ENCODE measurements at regions of chr5 and their contacts with region 1.

Region 1: GRCh38 chr5:155616779-155617392 is 603.3 kb downstream of the KIF4B start:
- DNase-seq: peak; percentile 9 to 73
- H3K4me3 ChIP-seq: no peak overlapping the region
- H3K4me1 ChIP-seq: no peaks in the 10 kb centered on the region
- H3K27me3 ChIP-seq: no peaks in the 10 kb centered on the region; the same call in none of the 2 replicates

Region 2: DNA sequence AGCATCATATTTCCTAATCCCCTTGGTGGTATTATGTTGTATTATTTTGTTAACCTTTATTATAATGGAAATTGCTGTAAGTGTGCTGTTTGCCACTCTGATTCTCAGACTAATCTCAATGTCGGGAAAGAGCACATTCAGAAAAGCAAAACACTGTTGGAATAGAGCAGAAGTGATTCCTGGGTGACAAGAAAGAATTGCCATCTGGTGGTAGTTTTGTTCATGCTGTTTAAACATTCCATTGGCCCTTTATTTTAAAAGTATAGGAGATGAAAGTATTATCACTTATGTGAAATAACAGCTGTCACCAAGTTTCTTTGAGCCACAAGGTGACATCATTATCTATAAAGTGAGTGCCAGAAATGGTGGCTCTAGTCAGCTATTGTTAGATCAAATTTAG is 408.8 kb after region 1 on chr5:
- in situ Hi-C with region 1: no loop called
- DNase-seq: no peak
- H3K4me3 ChIP-seq: no peak overlapping the region
- H3K4me1 ChIP-seq: no peaks in the 10 kb centered on the region
- H3K27me3 ChIP-seq: 0 out of 2 replicates have a peak, but pooled peaks cover 2% of the 10 kb centered on the region

Region 3: GRCh38 chr5:156815988-156816599 is 1199.2 kb after region 1 on chr5:
- in situ Hi-C with region 1: loop called (anchors 25 kb)
- DNase-seq: peak; percentile 48 to 72
- H3K4me3 ChIP-seq: no peak overlapping the region
- H3K4me1 ChIP-seq: no peaks in the 10 kb centered on the region
- H3K27me3 ChIP-seq: no peaks in the 10 kb centered on the region

Region 4: DNA sequence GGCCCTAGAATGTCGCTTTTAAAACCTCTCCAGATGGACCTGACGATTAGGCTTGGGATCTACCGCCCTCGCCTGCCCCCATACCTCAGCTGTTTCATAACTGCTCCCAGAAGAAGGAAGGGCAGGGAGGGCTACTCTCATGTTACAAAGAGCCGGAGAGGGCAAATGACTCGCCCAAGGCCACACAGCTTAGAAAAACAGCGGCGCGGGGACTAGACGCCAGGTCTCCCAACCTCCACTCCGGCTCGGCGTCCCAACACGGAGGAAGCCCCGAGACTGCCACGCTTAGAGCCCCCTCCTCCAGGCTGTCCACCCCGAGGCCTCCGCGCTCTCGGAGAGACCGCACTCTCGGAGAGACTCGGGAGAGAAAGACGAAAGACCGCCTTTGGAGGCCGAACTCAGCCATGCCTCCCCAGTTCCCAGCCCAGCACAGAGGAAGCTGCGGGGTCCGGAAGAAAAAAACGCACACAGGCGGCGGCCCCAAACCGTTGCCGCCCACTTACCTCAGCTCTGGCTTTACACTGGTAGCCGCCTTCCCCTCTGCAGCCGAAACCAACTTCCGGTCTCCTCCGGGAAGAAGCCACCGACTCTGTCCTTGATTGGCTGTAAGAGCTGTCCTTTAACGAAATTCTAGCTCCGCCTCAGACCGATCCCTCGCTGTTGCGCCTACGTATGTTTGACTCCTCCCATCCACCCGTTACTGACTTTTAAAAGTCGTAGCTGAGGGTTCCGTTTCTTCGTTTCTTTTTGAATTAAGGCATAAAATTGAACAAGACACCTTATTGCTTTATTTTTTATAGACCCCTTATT is 1525.6 kb after region 1 on chr5 and contains the start of gene MED7:
- in situ Hi-C with region 1: loop called (anchors 25 kb)
- DNase-seq: peak; percentile 95 to 96
- H3K4me3 ChIP-seq: peak within 1 kb of the TSS; percentile 85
- H3K4me1 ChIP-seq: no peaks in the 10 kb centered on the region; the same call in 1 of the 2 replicates
- H3K27me3 ChIP-seq: no peaks in the 10 kb centered on the region

Measured in HAP-1 (cell line).